ENCODE measurements at regions of chr17 and their contacts with region 1.

Region 1: GRCh38 chr17:57243171-57243948 is 13.0 kb upstream of the MSI2 start:
- DNase-seq: peak; percentile 60 to 86 (median 77)
- ATAC-seq: peak; percentile 97
- H3K4me3 ChIP-seq: no peak overlapping the region
- H3K4me3 Mint-ChIP-seq: no peak overlapping the region
- H3K27ac ChIP-seq: no peak overlapping the region
- H3K27ac Mint-ChIP-seq: no peak overlapping the region
- H3K4me1 ChIP-seq: no peaks in the 10 kb centered on the region
- H3K4me1 Mint-ChIP-seq: peaks cover 2% of the 10 kb centered on the region
- H3K27me3 ChIP-seq: no peaks in the 10 kb centered on the region
- H3K27me3 Mint-ChIP-seq: no peaks in the 10 kb centered on the region
- CTCF ChIP-seq: peak; percentile 99

Region 2: GRCh38 chr17:57130761-57131461 is 112.4 kb before region 1 on chr17:
- CTCF ChIA-PET with region 1: interaction called, 7 read pairs
- POLR2A ChIA-PET with region 1: no interaction called
- intact Hi-C with region 1: loop called in 1 of 2 experiments (anchors 2 kb)
- DNase-seq: peak; percentile 71 to 88 (median 85)
- ATAC-seq: peak; percentile 95
- H3K4me3 ChIP-seq: no peak overlapping the region
- H3K4me3 Mint-ChIP-seq: no peak overlapping the region
- H3K27ac ChIP-seq: no peak overlapping the region
- H3K27ac Mint-ChIP-seq: no peak overlapping the region
- H3K4me1 ChIP-seq: peaks cover 3% of the 10 kb centered on the region
- H3K4me1 Mint-ChIP-seq: peaks cover 9% of the 10 kb centered on the region
- H3K27me3 ChIP-seq: no peaks in the 10 kb centered on the region
- H3K27me3 Mint-ChIP-seq: no peaks in the 10 kb centered on the region
- CTCF ChIP-seq: peak; percentile 83

Region 3: GRCh38 chr17:57166717-57167198 is 76.6 kb before region 1 on chr17:
- CTCF ChIA-PET with region 1: no interaction called
- POLR2A ChIA-PET with region 1: no interaction called
- intact Hi-C with region 1: no loop called
- DNase-seq: no peak
- ATAC-seq: no peak
- H3K4me3 ChIP-seq: no peak overlapping the region
- H3K4me3 Mint-ChIP-seq: no peak overlapping the region
- H3K27ac ChIP-seq: no peak overlapping the region
- H3K27ac Mint-ChIP-seq: no peak overlapping the region
- H3K4me1 ChIP-seq: no peaks in the 10 kb centered on the region
- H3K4me1 Mint-ChIP-seq: no peaks in the 10 kb centered on the region
- H3K27me3 ChIP-seq: no peaks in the 10 kb centered on the region
- H3K27me3 Mint-ChIP-seq: peaks cover 9% of the 10 kb centered on the region
- CTCF ChIP-seq: no peak

Region 4: DNA sequence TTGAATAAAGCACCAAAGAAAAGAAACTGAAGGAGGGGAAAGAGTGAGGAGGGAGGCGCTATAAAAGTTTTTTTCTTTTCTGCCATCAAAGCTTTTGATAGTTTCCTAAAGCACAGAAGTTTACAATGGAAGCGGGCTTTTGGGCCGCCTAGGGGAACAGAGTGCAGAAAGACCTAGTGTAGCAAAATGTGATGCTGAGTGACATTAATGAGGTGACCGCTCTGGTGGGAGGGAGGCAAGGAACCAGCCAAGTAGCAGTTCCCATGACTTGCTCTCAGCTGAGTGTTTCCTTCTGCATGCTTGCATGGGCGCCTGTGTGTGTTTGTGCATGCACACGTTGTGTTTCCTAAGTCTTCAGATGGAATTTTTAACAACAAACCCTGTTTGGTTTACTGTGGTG is 28.5 kb after region 1 on chr17:
- CTCF ChIA-PET with region 1: interaction called, 31 read pairs
- POLR2A ChIA-PET with region 1: no interaction called
- intact Hi-C with region 1: no loop called
- DNase-seq: no peak
- ATAC-seq: no peak
- H3K4me3 ChIP-seq: no peak overlapping the region
- H3K4me3 Mint-ChIP-seq: no peak overlapping the region
- H3K27ac ChIP-seq: no peak overlapping the region
- H3K27ac Mint-ChIP-seq: no peak overlapping the region
- H3K4me1 ChIP-seq: no peaks in the 10 kb centered on the region
- H3K4me1 Mint-ChIP-seq: peaks cover 55% of the 10 kb centered on the region
- H3K27me3 ChIP-seq: no peaks in the 10 kb centered on the region
- H3K27me3 Mint-ChIP-seq: no peaks in the 10 kb centered on the region
- CTCF ChIP-seq: no peak

Region 5: GRCh38 chr17:57401556-57402488 is 158.5 kb after region 1 on chr17:
- CTCF ChIA-PET with region 1: interaction called, 13 read pairs
- POLR2A ChIA-PET with region 1: no interaction called
- intact Hi-C with region 1: loop called (anchors 5 kb)
- DNase-seq: no peak
- ATAC-seq: no peak
- H3K4me3 ChIP-seq: no peak overlapping the region
- H3K4me3 Mint-ChIP-seq: no peak overlapping the region
- H3K27ac ChIP-seq: no peak overlapping the region
- H3K27ac Mint-ChIP-seq: no peak overlapping the region
- H3K4me1 ChIP-seq: peaks cover 10% of the 10 kb centered on the region
- H3K4me1 Mint-ChIP-seq: peaks cover 35% of the 10 kb centered on the region
- H3K27me3 ChIP-seq: no peaks in the 10 kb centered on the region
- H3K27me3 Mint-ChIP-seq: no peaks in the 10 kb centered on the region
- CTCF ChIP-seq: no peak

Region 6: GRCh38 chr17:57518587-57519581 is 275.5 kb after region 1 on chr17:
- CTCF ChIA-PET with region 1: interaction called, 7 read pairs
- POLR2A ChIA-PET with region 1: no interaction called
- intact Hi-C with region 1: loop called (anchors 1 to 2 kb)
- DNase-seq: no peak
- ATAC-seq: no peak
- H3K4me3 ChIP-seq: no peak overlapping the region
- H3K4me3 Mint-ChIP-seq: no peak overlapping the region
- H3K27ac ChIP-seq: no peak overlapping the region
- H3K27ac Mint-ChIP-seq: no peak overlapping the region
- H3K4me1 ChIP-seq: no peaks in the 10 kb centered on the region
- H3K4me1 Mint-ChIP-seq: peaks cover 7% of the 10 kb centered on the region
- H3K27me3 ChIP-seq: no peaks in the 10 kb centered on the region
- H3K27me3 Mint-ChIP-seq: no peaks in the 10 kb centered on the region
- CTCF ChIP-seq: no peak

Region 7: GRCh38 chr17:57727630-57728175 is 484.3 kb after region 1 on chr17:
- CTCF ChIA-PET with region 1: interaction called, 13 read pairs
- POLR2A ChIA-PET with region 1: no interaction called
- intact Hi-C with region 1: no loop called
- DNase-seq: no peak
- ATAC-seq: no peak
- H3K4me3 ChIP-seq: no peak overlapping the region
- H3K4me3 Mint-ChIP-seq: no peak overlapping the region
- H3K27ac ChIP-seq: no peak overlapping the region
- H3K27ac Mint-ChIP-seq: no peak overlapping the region
- H3K4me1 ChIP-seq: no peaks in the 10 kb centered on the region
- H3K4me1 Mint-ChIP-seq: no peaks in the 10 kb centered on the region
- H3K27me3 ChIP-seq: no peaks in the 10 kb centered on the region
- H3K27me3 Mint-ChIP-seq: no peaks in the 10 kb centered on the region
- CTCF ChIP-seq: no peak

Region 8: GRCh38 chr17:58112970-58113631 is 869.7 kb after region 1 on chr17:
- CTCF ChIA-PET with region 1: no interaction called
- POLR2A ChIA-PET with region 1: no interaction called
- intact Hi-C with region 1: loop called in 1 of 2 experiments (anchors 5 kb)
- DNase-seq: peak; percentile 76 to 89 (median 83)
- ATAC-seq: peak; percentile 99
- H3K4me3 ChIP-seq: no peak overlapping the region
- H3K4me3 Mint-ChIP-seq: no peak overlapping the region
- H3K27ac ChIP-seq: no peak overlapping the region
- H3K27ac Mint-ChIP-seq: no peak overlapping the region
- H3K4me1 ChIP-seq: no peaks in the 10 kb centered on the region
- H3K4me1 Mint-ChIP-seq: peaks cover 5% of the 10 kb centered on the region
- H3K27me3 ChIP-seq: no peaks in the 10 kb centered on the region
- H3K27me3 Mint-ChIP-seq: peaks cover 24% of the 10 kb centered on the region
- CTCF ChIP-seq: peak; percentile 96

Measured in CD8-positive, alpha-beta T cell (primary cell).